ENCODE measurements at regions of chr1 and their contacts with region 1.

Region 1: DNA sequence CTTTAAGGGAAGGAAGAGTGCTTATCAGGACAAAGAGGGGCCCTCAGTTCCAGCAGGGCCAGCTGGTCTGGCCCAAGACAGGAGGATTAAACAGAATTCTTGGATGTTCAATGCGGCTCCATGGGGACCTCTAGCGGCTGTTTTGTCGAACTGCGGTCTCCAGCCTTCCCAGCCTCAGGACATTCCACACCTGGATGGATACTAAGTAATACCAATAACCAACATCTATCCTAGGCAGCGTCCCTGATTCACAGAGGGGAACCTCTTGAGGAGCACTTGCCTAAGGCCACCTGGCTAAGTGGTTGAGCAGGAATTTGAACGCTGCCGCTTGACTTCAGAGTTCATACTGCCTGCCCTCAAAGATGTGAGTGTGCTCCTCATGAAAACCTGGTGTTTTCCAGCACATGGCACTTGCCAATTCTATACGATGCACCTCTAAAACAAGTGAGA is 15.5 kb upstream of the CD247 start:
- DNase-seq: peak; percentile 78
- ATAC-seq: peak; percentile 90
- H3K4me3 Mint-ChIP-seq: no peak overlapping the region
- H3K27ac Mint-ChIP-seq: no peak overlapping the region
- H3K4me1 Mint-ChIP-seq: peaks cover 4% of the 10 kb centered on the region
- H3K27me3 Mint-ChIP-seq: no peaks in the 10 kb centered on the region

Region 2: DNA sequence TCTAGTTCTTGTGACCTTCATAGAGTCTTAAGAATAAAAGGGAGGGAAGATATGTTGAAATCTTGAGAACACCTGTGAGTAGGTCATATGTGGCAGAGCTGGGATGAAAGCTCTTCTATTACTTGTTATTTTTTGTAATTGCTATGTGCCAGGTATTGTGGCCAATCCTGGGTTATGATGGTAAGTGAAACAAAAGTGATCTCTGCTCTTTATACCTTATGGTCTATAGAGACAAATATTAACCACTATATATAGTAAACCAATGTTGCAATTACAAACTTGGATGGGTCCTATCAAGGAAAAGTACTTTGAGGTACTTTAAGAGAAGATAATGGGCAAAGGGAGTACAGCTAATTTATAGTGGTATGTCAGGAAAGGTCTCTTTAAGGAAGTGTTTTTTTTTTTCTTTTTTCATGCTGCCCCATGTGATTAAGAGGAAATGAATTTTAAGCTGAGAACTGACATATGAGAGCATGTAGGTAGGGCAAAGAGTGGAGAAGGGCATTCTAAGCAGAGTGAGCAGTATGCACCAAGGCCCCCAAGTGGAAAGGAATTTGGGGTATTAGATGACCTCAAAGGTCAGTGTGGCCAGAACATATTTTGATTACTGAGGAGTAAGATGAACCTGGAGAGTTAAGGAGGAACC is 269.9 kb before region 1 on chr1:
- CTCF ChIA-PET with region 1: interaction called, 58 read pairs
- POLR2A ChIA-PET with region 1: no interaction called
- intact Hi-C with region 1: loop called (anchors 1 kb)
- DNase-seq: no peak
- ATAC-seq: peak; percentile 43
- H3K4me3 Mint-ChIP-seq: no peak overlapping the region
- H3K27ac Mint-ChIP-seq: no peak overlapping the region
- H3K4me1 Mint-ChIP-seq: peaks cover 28% of the 10 kb centered on the region
- H3K27me3 Mint-ChIP-seq: no peaks in the 10 kb centered on the region

Region 3: GRCh38 chr1:167401260-167401873 is 132.5 kb before region 1 on chr1:
- CTCF ChIA-PET with region 1: interaction called, 41 read pairs
- POLR2A ChIA-PET with region 1: no interaction called
- intact Hi-C with region 1: loop called (anchors 1 kb)
- DNase-seq: peak; percentile 64
- ATAC-seq: peak; percentile 71
- H3K4me3 Mint-ChIP-seq: no peak overlapping the region
- H3K27ac Mint-ChIP-seq: no peak overlapping the region
- H3K4me1 Mint-ChIP-seq: no peaks in the 10 kb centered on the region
- H3K27me3 Mint-ChIP-seq: no peaks in the 10 kb centered on the region

Region 4: DNA sequence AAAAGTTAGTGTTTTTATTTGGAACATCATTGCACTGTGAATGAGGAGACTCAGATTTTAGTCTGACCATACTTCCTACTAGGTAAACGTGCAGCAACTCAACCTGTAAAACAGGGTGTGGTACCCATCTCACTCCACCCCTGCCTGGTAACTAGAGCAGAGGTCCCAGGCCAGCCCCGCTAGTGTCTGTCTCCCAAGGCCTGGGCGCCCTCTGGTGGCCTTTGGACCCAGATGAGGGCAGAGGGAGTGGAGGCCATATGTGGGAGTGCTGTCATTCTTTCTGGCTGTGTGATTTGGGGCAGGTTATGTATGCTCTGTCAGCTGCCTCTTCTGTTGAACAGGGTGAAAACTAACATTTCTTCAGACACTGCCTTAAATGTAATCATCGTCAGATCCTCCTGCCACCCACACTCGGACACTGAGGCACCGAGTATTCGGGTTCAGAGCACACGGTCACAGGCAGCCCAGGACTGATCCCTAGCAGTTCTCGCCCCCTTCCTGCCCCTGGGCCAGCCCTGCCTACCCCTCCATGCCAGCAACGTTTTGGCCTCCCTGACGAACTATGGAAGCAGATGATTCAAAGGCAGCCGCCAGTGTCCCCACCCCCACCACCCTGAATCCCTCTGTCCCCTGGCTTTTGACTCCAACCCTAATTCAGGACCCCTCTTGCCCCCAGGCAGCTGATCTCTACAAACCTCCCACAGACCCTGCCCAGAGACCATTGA is 91.6 kb before region 1 on chr1:
- CTCF ChIA-PET with region 1: interaction called, 13 read pairs
- POLR2A ChIA-PET with region 1: interaction called, 4 read pairs
- intact Hi-C with region 1: loop called in 1 of 2 experiments (anchors 1 kb)
- DNase-seq: peak; percentile 94
- ATAC-seq: peak; percentile 80
- H3K4me3 Mint-ChIP-seq: no peak overlapping the region
- H3K27ac Mint-ChIP-seq: peak overlapping the region; percentile 68
- H3K4me1 Mint-ChIP-seq: peaks cover 84% of the 10 kb centered on the region
- H3K27me3 Mint-ChIP-seq: no peaks in the 10 kb centered on the region

Region 5: GRCh38 chr1:167454894-167455785 is 78.7 kb before region 1 on chr1:
- CTCF ChIA-PET with region 1: interaction called, 29 read pairs
- POLR2A ChIA-PET with region 1: no interaction called
- intact Hi-C with region 1: no loop called
- DNase-seq: peak; percentile 88
- ATAC-seq: peak; percentile 58
- H3K4me3 Mint-ChIP-seq: peak overlapping the region; percentile 75
- H3K27ac Mint-ChIP-seq: peak overlapping the region; percentile 86
- H3K4me1 Mint-ChIP-seq: peaks cover 78% of the 10 kb centered on the region
- H3K27me3 Mint-ChIP-seq: no peaks in the 10 kb centered on the region

Region 6: DNA sequence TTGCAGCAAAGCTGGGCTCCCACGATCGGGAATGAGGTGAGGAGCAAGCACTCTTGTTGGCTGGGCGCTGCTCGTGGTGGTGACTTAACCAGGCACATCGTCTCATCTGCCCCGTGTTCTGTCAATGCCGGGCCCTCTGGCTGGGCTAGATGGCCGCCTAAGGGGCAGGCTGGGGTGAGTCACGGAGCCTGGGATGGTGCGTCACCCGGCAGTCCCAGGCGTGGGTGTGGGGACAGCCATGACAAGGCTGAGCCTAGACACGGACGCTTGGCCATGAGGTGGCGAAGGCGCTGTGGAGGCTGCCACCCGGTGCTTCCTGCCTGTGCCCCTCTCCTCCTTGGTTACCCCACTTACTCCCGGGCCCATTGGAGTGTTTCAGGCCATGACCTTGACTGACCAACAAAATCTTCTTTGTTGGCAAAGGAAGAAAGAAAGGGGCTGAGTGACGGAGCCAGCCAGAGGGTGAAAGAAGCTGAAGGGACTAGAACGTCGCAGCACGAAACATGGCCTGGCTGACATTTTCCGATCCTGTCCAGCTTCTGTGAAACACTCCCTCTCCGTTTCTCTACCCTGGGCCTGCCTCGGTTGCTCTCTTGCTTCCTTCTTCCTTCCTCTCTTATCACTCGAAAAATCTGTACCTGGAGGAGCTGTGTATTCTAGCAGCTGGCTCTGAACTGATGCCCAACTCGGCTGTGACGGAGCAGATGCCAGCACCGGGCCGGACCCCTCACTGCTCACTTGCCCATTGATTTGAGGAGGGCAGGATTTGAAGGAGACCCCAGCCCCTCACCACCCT is 16.1 kb before region 1 on chr1:
- CTCF ChIA-PET with region 1: interaction called, 90 read pairs
- POLR2A ChIA-PET with region 1: no interaction called
- intact Hi-C with region 1: no loop called
- DNase-seq: peak; percentile 97
- ATAC-seq: peak; percentile 88
- H3K4me3 Mint-ChIP-seq: peak overlapping the region; percentile 90
- H3K27ac Mint-ChIP-seq: peak overlapping the region; percentile 99
- H3K4me1 Mint-ChIP-seq: peaks cover 43% of the 10 kb centered on the region
- H3K27me3 Mint-ChIP-seq: no peaks in the 10 kb centered on the region

Region 7: GRCh38 chr1:167553136-167554027 is 19.5 kb after region 1 on chr1 and contains the start of gene CREG1:
- CTCF ChIA-PET with region 1: interaction called, 16 read pairs
- POLR2A ChIA-PET with region 1: interaction called, 4 read pairs
- intact Hi-C with region 1: no loop called
- DNase-seq: peak; percentile 94
- ATAC-seq: peak; percentile 100
- H3K4me3 Mint-ChIP-seq: peak within 1 kb of the TSS; percentile 77
- H3K27ac Mint-ChIP-seq: peak within 1 kb of the TSS; percentile 38
- H3K4me1 Mint-ChIP-seq: peaks cover 33% of the 10 kb centered on the region
- H3K27me3 Mint-ChIP-seq: no peaks in the 10 kb centered on the region
- total RNA-seq, gene CREG1: 8.8 to 9.4 TPM